ENCODE measurements at regions of chr6 and their contacts with region 1.

Region 1: GRCh38 chr6:78984225-78984950 is 93.7 kb downstream of the PHIP start:
- DNase-seq: no peak
- ATAC-seq: no peak
- H3K4me3 ChIP-seq: no peak overlapping the region
- H3K4me3 Mint-ChIP-seq: no peak overlapping the region
- H3K27ac ChIP-seq: no peak overlapping the region
- H3K27ac Mint-ChIP-seq: peak overlapping the region; percentile 23
- H3K4me1 ChIP-seq: no peaks in the 10 kb centered on the region
- H3K4me1 Mint-ChIP-seq: peaks cover 10% of the 10 kb centered on the region
- H3K27me3 ChIP-seq: no peaks in the 10 kb centered on the region
- H3K27me3 Mint-ChIP-seq: no peaks in the 10 kb centered on the region
- CTCF ChIP-seq: no peak

Region 2: DNA sequence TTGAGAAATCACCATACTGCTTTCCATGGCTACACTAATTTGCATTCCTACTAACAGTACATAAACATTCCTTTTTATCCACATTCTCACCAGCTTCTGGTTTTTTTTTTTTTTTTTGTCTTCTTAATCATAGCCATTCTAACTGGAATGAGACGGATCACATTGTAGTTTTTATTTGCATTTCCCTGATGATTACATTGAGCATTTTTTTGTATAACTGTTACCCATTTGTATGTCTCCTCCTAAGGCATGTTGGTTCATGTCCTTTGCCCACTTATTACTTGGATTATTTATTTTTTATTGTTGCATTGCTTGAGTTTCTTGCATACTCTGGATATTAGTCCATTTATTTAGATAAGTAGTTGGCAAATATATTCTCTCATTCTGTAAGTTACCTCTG is 1073.6 kb before region 1 on chr6:
- CTCF ChIA-PET with region 1: no interaction called
- POLR2A ChIA-PET with region 1: no interaction called
- intact Hi-C with region 1: no loop called
- DNase-seq: no peak
- ATAC-seq: no peak
- H3K4me3 ChIP-seq: no peak overlapping the region
- H3K4me3 Mint-ChIP-seq: no peak overlapping the region
- H3K27ac ChIP-seq: no peak overlapping the region
- H3K27ac Mint-ChIP-seq: no peak overlapping the region
- H3K4me1 ChIP-seq: no peaks in the 10 kb centered on the region
- H3K4me1 Mint-ChIP-seq: no peaks in the 10 kb centered on the region
- H3K27me3 ChIP-seq: no peaks in the 10 kb centered on the region
- H3K27me3 Mint-ChIP-seq: no peaks in the 10 kb centered on the region
- CTCF ChIP-seq: no peak

Region 3: GRCh38 chr6:78947962-78948361 is 36.4 kb before region 1 on chr6:
- CTCF ChIA-PET with region 1: no interaction called
- POLR2A ChIA-PET with region 1: no interaction called
- intact Hi-C with region 1: loop called in 1 of 2 experiments (anchors 5 kb)
- DNase-seq: no peak
- ATAC-seq: no peak
- H3K4me3 ChIP-seq: no peak overlapping the region
- H3K4me3 Mint-ChIP-seq: no peak overlapping the region
- H3K27ac ChIP-seq: no peak overlapping the region
- H3K27ac Mint-ChIP-seq: no peak overlapping the region
- H3K4me1 ChIP-seq: no peaks in the 10 kb centered on the region
- H3K4me1 Mint-ChIP-seq: no peaks in the 10 kb centered on the region
- H3K27me3 ChIP-seq: no peaks in the 10 kb centered on the region
- H3K27me3 Mint-ChIP-seq: no peaks in the 10 kb centered on the region
- CTCF ChIP-seq: no peak

Region 4: DNA sequence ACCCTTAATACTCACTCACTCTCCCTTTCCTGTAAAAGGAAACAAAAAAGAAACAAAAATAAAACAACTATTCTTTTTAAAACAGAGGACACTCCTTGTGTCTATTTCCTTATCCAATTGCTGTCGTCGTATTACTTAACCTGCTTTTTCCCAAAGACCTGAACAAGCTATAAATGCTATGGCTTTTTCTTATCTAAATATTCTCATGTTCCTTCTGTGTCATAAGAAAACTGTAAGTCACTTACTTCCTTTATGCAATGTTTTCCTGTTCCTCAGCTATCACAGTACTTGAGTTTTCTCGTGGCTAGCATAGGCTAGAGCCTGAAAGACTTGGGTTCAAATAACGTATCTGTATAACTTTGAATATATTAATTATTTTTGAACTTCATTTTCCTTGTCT is 17.8 kb before region 1 on chr6:
- CTCF ChIA-PET with region 1: no interaction called
- POLR2A ChIA-PET with region 1: interaction called, 3 read pairs
- intact Hi-C with region 1: loop called in 1 of 2 experiments (anchors 2 kb)
- DNase-seq: no peak
- ATAC-seq: no peak
- H3K4me3 ChIP-seq: no peak overlapping the region
- H3K4me3 Mint-ChIP-seq: no peak overlapping the region
- H3K27ac ChIP-seq: no peak overlapping the region
- H3K27ac Mint-ChIP-seq: no peak overlapping the region
- H3K4me1 ChIP-seq: no peaks in the 10 kb centered on the region
- H3K4me1 Mint-ChIP-seq: no peaks in the 10 kb centered on the region
- H3K27me3 ChIP-seq: no peaks in the 10 kb centered on the region
- H3K27me3 Mint-ChIP-seq: no peaks in the 10 kb centered on the region
- CTCF ChIP-seq: no peak